Activated CD4-positive, alpha-beta T cell treated with anti-CD3 and anti-CD28 coated beads, Interleukin-2, amount 10 ng/mL, durations not matched to agents 24 days and 14 days (primary cell): ENCODE measurements at regions of chr2 and their contacts with region 1.

Region 1: GRCh38 chr2:9782197-9782719 is 61.0 kb upstream of the TAF1B start:
- DNase-seq: peak; percentile 94
- H3K4me3 Mint-ChIP-seq: peak overlapping the region; percentile 46
- H3K27ac Mint-ChIP-seq: peak overlapping the region; percentile 98
- H3K4me1 Mint-ChIP-seq: peaks cover 52% of the 10 kb centered on the region
- H3K27me3 Mint-ChIP-seq: no peaks in the 10 kb centered on the region

Region 2: GRCh38 chr2:9423100-9423921 is 358.9 kb before region 1 on chr2 and contains the starts of genes CPSF3 and ITGB1BP1:
- intact Hi-C with region 1: loop called (anchors 1 kb)
- DNase-seq: peak; percentile 99
- H3K4me3 Mint-ChIP-seq: no peak within 1 kb of the TSS
- H3K27ac Mint-ChIP-seq: peak within 1 kb of the TSS; percentile 94
- H3K4me1 Mint-ChIP-seq: peaks cover 34% of the 10 kb centered on the region
- H3K27me3 Mint-ChIP-seq: no peaks in the 10 kb centered on the region
- total RNA-seq, gene CPSF3: 81.4 TPM in 2 replicates
- total RNA-seq, gene ITGB1BP1: 121 and 131 TPM in 2 replicates

Region 3: DNA sequence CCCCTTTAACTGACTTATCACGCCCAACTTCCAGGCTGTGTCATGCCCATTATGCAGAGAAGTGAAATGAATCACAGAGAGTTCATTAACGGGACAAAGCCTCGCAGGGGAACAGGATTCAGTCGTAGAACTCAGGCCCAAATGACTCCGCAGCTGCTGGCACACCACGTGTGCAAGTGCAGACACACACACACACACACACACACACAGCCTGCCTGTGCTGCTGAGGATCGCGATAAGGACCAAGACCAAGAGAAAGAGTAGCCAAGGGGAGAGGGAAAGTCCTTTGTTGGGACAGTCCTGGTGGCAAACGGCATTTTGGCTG is 29.0 kb before region 1 on chr2:
- intact Hi-C with region 1: loop called (anchors 1 kb)
- DNase-seq: peak; percentile 83
- H3K4me3 Mint-ChIP-seq: peak overlapping the region; percentile 56
- H3K27ac Mint-ChIP-seq: peak overlapping the region; percentile 88
- H3K4me1 Mint-ChIP-seq: peaks cover 59% of the 10 kb centered on the region
- H3K27me3 Mint-ChIP-seq: peaks cover 32% of the 10 kb centered on the region

Region 4: GRCh38 chr2:9770308-9771100 is 11.8 kb before region 1 on chr2:
- intact Hi-C with region 1: loop called (anchors 1 kb)
- DNase-seq: peak; percentile 86
- H3K4me3 Mint-ChIP-seq: no peak overlapping the region
- H3K27ac Mint-ChIP-seq: no peak overlapping the region
- H3K4me1 Mint-ChIP-seq: peaks cover 20% of the 10 kb centered on the region
- H3K27me3 Mint-ChIP-seq: peaks cover 2% of the 10 kb centered on the region

Region 5: GRCh38 chr2:9830690-9831410 is 48.6 kb after region 1 on chr2:
- intact Hi-C with region 1: no loop called
- DNase-seq: peak; percentile 71
- H3K4me3 Mint-ChIP-seq: no peak overlapping the region
- H3K27ac Mint-ChIP-seq: no peak overlapping the region
- H3K4me1 Mint-ChIP-seq: peaks cover 15% of the 10 kb centered on the region
- H3K27me3 Mint-ChIP-seq: peaks cover 46% of the 10 kb centered on the region

Region 6: GRCh38 chr2:9843229-9844035 is 61.2 kb after region 1 on chr2 and contains the start of gene TAF1B:
- intact Hi-C with region 1: loop called (anchors 1 kb)
- DNase-seq: peak; percentile 97
- H3K4me3 Mint-ChIP-seq: peak within 1 kb of the TSS; percentile 92
- H3K27ac Mint-ChIP-seq: peak within 1 kb of the TSS; percentile 92
- H3K4me1 Mint-ChIP-seq: peaks cover 34% of the 10 kb centered on the region
- H3K27me3 Mint-ChIP-seq: no peaks in the 10 kb centered on the region
- total RNA-seq, gene TAF1B: 21.9 and 22.7 TPM in 2 replicates

Region 7: GRCh38 chr2:10019174-10019573 is 236.9 kb after region 1 on chr2:
- intact Hi-C with region 1: no loop called
- DNase-seq: no peak
- H3K4me3 Mint-ChIP-seq: no peak overlapping the region
- H3K27ac Mint-ChIP-seq: no peak overlapping the region
- H3K4me1 Mint-ChIP-seq: no peaks in the 10 kb centered on the region
- H3K27me3 Mint-ChIP-seq: peaks cover 6% of the 10 kb centered on the region